Activated CD4-positive, alpha-beta T cell treated with anti-CD3 and anti-CD28 coated beads for 36 hours (primary cell): ENCODE measurements at regions of chr17 and their contacts with region 1.

Region 1: DNA sequence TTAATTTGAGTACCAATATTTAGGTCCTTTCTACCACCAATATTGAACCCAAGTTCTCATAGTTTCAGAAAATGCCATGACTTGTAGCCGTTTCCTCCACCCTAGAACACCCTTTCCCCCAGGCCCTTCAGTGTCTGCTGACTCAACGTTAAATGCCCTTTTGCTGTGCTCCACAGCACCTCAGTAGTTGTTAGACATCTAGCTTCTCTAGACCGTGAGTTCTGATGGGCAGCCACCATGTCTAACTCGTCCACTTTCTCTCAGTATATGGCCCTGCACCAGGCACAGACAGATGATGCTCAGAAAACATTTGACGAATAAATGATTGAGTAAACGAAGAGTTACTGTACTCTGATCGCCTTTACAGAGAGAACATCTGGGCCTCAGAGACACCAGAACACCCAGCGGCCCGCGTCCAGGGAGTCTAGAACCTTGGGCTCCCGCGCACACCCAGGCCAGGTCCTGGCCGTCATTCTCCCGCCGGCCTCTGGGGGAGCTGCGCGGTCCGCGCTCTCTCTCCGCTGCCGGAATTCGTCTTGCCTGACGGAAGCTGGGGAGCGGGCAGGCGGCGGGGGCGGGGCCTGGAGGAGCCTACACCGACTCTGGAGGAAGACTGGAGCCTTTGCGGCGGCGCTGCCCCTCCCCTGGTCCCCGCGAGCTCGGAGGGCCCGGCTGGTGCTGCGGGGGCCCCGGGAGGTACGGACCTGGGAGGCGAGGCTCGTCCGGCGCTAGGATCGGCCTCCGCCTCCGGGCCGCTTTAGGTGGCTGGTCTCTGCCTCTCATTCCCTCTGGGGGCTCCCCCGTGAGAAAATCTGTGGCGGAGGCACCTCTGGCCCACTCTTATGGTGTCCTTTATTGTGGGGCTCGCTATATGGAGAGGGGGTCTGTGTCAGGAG is at the start of gene NKIRAS2:
- DNase-seq: peak; percentile 97
- ATAC-seq: peak; percentile 78
- H3K4me3 Mint-ChIP-seq: peak within 1 kb of the TSS; percentile 100
- H3K27ac Mint-ChIP-seq: peak within 1 kb of the TSS; percentile 88
- H3K4me1 Mint-ChIP-seq: peaks cover 52% of the 10 kb centered on the region
- H3K27me3 Mint-ChIP-seq: no peaks in the 10 kb centered on the region
- total RNA-seq, gene NKIRAS2: 16.3 to 17.2 TPM

Region 2: DNA sequence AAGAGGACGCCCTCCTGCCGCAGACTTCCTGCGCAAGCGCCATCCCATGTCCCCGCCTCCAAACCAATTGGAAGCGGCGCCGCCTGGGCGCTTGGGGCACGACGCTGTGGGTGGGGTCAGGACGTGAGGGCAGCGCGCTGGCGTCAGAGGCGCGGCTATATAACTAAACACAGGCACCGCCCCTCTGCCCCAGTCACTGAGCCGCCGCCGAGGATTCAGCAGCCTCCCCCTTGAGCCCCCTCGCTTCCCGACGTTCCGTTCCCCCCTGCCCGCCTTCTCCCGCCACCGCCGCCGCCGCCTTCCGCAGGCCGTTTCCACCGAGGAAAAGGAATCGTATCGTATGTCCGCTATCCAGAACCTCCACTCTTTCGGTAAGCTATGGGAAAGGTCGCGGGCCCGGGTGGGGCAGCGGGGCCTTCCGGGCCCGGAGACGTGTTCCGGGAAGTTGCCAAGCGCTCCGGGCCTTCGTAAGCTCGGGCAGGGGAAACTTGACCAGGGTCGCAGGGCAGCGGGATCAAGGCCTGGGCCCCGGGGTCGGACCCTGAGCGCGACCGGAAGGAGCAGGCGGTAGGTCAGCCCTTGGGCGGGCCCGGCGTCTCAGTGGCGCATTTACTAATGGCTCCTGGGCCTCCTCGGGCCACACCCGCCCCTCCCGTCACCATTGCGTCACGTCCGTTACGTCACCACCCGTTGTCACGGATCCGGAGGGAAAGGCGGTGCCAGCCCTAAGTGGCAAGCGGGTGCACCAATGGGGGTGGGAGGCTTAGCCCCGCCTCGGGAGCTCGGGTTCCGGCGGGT is 330.9 kb before region 1 on chr17 and contains the start of gene EIF1:
- CTCF ChIA-PET with region 1: no interaction called
- POLR2A ChIA-PET with region 1: no interaction called
- intact Hi-C with region 1: loop called in 1 of 2 experiments (anchors 1 kb)
- DNase-seq: peak; percentile 100
- ATAC-seq: peak; percentile 81
- H3K4me3 Mint-ChIP-seq: peak within 1 kb of the TSS; percentile 97
- H3K27ac Mint-ChIP-seq: peak within 1 kb of the TSS; percentile 95
- H3K4me1 Mint-ChIP-seq: peaks cover 20% of the 10 kb centered on the region
- H3K27me3 Mint-ChIP-seq: no peaks in the 10 kb centered on the region
- total RNA-seq, gene EIF1: 869 to 977 TPM

Region 3: GRCh38 chr17:41930009-41930832 is 89.5 kb before region 1 on chr17 and contains the start of gene ODAD4:
- CTCF ChIA-PET with region 1: interaction called, 16 read pairs
- POLR2A ChIA-PET with region 1: interaction called, 3 read pairs
- intact Hi-C with region 1: loop called in 1 of 2 experiments (anchors 1 kb)
- DNase-seq: peak; percentile 98
- ATAC-seq: peak; percentile 99
- H3K4me3 Mint-ChIP-seq: peak within 1 kb of the TSS; percentile 96
- H3K27ac Mint-ChIP-seq: peak within 1 kb of the TSS; percentile 98
- H3K4me1 Mint-ChIP-seq: peaks cover 21% of the 10 kb centered on the region
- H3K27me3 Mint-ChIP-seq: no peaks in the 10 kb centered on the region
- total RNA-seq, gene ODAD4: 0.81 to 1.1 TPM

Region 4: DNA sequence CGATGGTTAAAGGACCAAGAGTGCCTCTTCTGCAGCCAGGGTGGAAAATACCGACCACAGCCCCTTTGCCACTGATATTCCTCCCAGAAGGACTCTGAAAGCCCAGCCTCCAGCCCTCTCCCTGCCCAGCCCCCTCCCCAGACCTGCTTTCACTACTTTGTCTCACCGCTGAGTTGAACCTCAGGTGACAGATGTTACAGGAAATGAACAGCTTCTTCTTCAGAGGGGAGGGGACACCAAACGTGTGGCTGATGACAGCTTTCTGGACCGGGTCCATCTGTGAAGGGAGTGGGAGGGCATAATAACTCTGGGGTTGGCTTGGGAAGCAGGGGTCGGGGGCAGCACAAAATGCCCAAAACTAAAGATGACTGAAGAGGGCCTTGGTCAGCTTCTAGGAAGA is 14.3 kb after region 1 on chr17:
- CTCF ChIA-PET with region 1: interaction called, 10 read pairs
- POLR2A ChIA-PET with region 1: no interaction called
- intact Hi-C with region 1: no loop called
- DNase-seq: peak; percentile 35
- ATAC-seq: peak; percentile 58
- H3K4me3 Mint-ChIP-seq: no peak overlapping the region
- H3K27ac Mint-ChIP-seq: no peak overlapping the region
- H3K4me1 Mint-ChIP-seq: peaks cover 4% of the 10 kb centered on the region
- H3K27me3 Mint-ChIP-seq: peaks cover 2% of the 10 kb centered on the region

Region 5: DNA sequence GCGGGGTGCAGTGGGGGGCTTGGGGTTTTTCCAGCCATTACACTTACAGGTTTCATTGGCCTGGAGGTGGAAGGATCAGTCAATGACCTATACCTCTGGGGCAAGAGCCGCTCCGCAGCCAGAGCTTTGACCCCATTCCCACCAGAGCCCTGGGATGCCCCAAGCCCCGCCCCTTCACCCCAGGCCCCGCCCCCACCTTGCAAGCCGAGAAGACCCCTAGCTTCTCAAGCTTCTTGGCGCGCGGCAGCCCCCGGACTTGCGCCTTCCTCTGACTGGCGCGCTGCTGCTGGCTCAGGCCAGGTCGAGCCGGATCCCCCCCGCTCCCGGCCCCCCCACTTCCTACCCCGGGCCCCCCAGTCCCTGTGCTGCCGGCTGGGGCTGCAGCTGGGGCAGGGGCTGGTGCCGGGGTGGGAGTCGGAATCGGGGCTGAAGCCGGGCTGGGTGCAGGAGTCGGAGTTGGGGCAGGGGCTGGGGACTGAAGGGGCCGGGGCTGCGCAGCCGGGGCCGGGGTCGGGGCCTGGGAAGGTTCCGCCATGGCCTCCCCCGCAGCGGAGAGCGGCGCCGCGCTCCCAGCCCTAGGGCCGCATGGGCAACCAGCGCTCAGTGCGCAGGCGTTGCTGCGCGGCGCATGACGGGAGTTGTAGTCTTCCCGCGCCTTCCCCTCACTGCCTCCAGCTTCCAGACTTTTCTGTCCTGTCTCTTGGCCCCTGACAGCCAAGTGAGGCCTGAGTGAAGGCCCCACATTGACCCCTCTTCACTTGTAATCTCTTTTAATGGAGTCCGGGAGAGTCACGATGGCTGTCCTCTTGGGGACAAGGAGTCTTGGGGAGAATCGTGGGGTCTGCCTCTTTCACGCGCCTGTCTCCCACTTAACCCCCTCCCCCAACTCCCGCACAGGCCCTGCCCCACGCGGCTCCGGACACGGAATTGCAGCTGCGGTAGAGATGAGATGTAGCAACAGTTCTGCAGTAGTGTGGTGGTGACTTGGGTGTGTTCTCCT is 101.3 kb after region 1 on chr17 and contains the start of gene KAT2A:
- CTCF ChIA-PET with region 1: interaction called, 17 read pairs
- POLR2A ChIA-PET with region 1: no interaction called
- intact Hi-C with region 1: loop called in 1 of 2 experiments (anchors 1 kb)
- DNase-seq: peak; percentile 90
- ATAC-seq: peak; percentile 93
- H3K4me3 Mint-ChIP-seq: peak within 1 kb of the TSS; percentile 70
- H3K27ac Mint-ChIP-seq: peak within 1 kb of the TSS; percentile 76
- H3K4me1 Mint-ChIP-seq: peaks cover 29% of the 10 kb centered on the region
- H3K27me3 Mint-ChIP-seq: no peaks in the 10 kb centered on the region
- total RNA-seq, gene KAT2A: 46.2 to 54.8 TPM

Region 6: DNA sequence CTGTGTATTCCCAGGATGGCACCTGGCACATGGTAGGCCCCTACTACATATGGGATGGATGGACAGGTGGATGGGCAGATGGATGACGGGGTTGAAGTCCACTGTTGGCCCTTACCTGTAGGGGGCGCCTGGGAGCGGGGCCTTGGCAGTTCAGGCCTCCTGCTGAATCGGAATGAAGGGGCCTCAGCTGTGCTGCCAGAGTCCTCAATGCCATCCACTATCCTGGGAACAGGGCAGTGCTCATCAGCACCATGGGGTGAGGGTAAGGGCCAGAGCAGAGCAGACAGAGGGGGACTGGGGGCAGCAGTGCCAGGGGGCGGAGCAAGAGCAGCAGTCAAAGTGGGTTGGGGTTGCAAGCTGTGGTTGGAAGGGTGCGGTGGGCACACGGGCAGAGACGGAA is 143.4 kb after region 1 on chr17:
- CTCF ChIA-PET with region 1: no interaction called
- POLR2A ChIA-PET with region 1: no interaction called
- intact Hi-C with region 1: no loop called
- DNase-seq: peak; percentile 80
- ATAC-seq: peak; percentile 60
- H3K4me3 Mint-ChIP-seq: no peak overlapping the region
- H3K27ac Mint-ChIP-seq: no peak overlapping the region
- H3K4me1 Mint-ChIP-seq: no peaks in the 10 kb centered on the region
- H3K27me3 Mint-ChIP-seq: no peaks in the 10 kb centered on the region

Region 7: GRCh38 chr17:42266918-42267778 is 247.4 kb after region 1 on chr17:
- CTCF ChIA-PET with region 1: no interaction called
- POLR2A ChIA-PET with region 1: no interaction called
- intact Hi-C with region 1: loop called in 1 of 2 experiments (anchors 5 kb)
- DNase-seq: peak; percentile 70
- ATAC-seq: peak; percentile 77
- H3K4me3 Mint-ChIP-seq: peak overlapping the region; percentile 47
- H3K27ac Mint-ChIP-seq: peak overlapping the region; percentile 98
- H3K4me1 Mint-ChIP-seq: peaks cover 61% of the 10 kb centered on the region
- H3K27me3 Mint-ChIP-seq: no peaks in the 10 kb centered on the region

Region 8: DNA sequence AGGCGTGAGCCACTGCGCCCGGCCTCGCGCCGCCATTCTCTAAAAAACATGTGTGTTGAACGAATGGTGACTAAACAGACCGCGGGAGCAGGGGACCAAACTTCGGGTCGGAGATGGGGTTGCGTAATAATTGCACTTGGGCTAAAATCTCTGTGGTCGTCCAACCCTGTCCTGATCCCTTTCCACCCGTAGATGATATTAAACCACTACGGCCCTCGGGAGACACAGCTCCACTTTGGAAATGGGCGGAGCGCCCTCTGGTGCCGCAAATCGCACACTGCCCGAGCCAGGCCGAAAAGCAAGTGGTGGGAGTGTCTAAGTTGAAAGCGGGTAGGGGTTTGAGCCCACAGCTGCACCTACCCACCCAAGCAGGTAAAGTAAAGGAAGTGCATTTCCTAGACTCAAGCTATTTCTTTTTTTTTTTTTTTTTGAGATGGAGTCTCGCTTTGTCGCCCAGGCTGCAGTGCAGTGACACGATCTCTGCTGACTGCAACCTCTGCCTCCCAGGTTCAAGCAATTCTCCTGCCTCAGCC is 386.3 kb after region 1 on chr17:
- CTCF ChIA-PET with region 1: no interaction called
- POLR2A ChIA-PET with region 1: no interaction called
- intact Hi-C with region 1: loop called in 1 of 2 experiments (anchors 2 kb)
- DNase-seq: peak; percentile 91
- ATAC-seq: peak; percentile 69
- H3K4me3 Mint-ChIP-seq: no peak overlapping the region
- H3K27ac Mint-ChIP-seq: no peak overlapping the region
- H3K4me1 Mint-ChIP-seq: peaks cover 19% of the 10 kb centered on the region
- H3K27me3 Mint-ChIP-seq: no peaks in the 10 kb centered on the region